AG04449 (cell line): ENCODE measurements at regions of chr14 and their contacts with region 1.

Region 1: DNA sequence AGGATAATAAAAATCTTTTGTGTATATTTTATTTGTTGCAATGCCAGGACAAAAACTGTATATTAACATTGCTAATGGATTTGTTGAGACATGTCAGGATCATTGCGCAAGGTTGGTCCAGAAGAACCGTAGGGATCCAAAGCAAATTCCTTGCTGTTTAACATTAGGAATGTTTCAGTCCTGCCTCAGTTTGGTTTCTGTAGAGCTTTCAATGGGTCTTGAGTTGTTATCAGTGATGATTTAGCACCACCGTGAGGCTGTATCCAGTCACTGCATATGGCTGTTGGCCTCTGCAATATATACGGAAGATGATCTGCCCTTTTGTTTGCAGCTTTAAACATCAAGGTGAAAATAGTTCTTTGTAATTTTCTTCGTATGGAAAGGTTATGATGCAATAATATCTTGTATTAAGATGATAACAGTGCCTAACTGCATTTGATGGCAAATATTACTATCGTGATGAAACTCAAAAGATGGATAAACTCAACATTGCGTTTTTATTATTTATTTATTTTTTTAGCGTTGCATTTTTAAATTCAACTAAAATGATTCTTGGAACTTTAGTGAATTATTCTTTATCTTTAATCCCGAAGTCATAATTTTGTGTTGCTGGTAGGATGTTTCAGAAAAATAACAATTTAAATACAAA is 231.2 kb downstream of the AKAP6 start:
- DNase-seq: peak; percentile 64
- H3K4me3 ChIP-seq: no peak overlapping the region
- CTCF ChIP-seq: peak; percentile 74

Region 2: DNA sequence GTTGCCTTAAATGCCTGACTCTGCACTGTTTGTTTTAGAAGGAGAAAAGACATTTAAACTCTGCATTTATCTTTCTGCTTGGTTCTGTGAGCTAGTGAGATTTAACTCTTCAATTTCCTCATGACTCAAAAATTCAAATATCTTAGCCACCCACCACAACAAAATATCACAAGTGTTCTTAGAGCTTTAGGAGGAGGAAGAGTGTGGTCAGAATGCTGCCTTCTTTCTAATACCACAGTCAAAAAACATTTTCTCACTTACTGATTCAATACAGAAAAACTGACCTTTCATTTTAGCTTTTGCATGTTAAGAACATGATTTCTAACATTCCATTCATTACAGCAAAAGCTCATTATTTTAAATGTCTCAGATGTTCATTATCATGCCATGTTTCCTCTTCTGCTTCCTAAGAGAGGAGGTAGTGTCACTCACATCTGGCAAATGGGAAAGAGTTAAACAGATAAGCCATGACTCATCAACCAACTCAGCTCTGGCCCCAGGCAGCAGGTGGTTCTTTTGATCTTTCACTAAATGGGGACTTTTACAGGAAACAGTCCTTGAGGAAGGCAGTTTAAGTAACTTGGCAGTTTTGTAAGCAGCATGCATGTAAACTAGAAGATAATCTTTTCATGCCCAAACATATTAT is 300.8 kb before region 1 on chr14:
- CTCF ChIA-PET with region 1: interaction called, 42 read pairs
- POLR2A ChIA-PET with region 1: no interaction called
- DNase-seq: no peak
- H3K4me3 ChIP-seq: no peak overlapping the region
- CTCF ChIP-seq: no peak

Region 3: GRCh38 chr14:32469388-32470160 is 90.8 kb before region 1 on chr14:
- CTCF ChIA-PET with region 1: interaction called, 36 read pairs
- POLR2A ChIA-PET with region 1: no interaction called
- DNase-seq: no peak
- H3K4me3 ChIP-seq: no peak overlapping the region
- CTCF ChIP-seq: peak; percentile 26

Region 4: DNA sequence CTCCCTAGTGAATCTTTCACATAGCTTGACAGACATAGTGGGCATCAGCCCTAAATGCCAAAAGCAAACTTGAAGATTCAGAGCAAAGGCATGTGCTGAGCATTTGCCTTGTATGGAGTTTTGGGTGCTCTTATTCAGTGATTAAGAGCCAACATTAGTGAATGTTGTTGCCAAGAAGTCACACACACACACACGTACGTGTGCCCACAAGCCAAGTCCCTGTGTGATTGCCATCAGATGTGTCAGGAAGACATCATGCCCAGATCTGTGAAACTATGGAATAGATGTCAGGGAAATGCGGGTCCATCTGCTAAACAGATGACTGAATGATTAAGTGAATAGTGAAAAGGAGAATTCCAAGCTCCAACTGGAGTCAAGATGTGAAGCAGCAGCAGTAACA is 82.3 kb before region 1 on chr14:
- CTCF ChIA-PET with region 1: interaction called, 36 read pairs
- POLR2A ChIA-PET with region 1: no interaction called
- DNase-seq: no peak
- H3K4me3 ChIP-seq: no peak overlapping the region
- CTCF ChIP-seq: no peak

Region 5: GRCh38 chr14:32509632-32510187 is 50.6 kb before region 1 on chr14:
- CTCF ChIA-PET with region 1: interaction called, 26 read pairs
- POLR2A ChIA-PET with region 1: no interaction called
- DNase-seq: peak; percentile 99
- H3K4me3 ChIP-seq: no peak overlapping the region
- CTCF ChIP-seq: no peak

Region 6: GRCh38 chr14:32545095-32545494 is 15.2 kb before region 1 on chr14:
- CTCF ChIA-PET with region 1: interaction called, 15 read pairs
- POLR2A ChIA-PET with region 1: no interaction called
- DNase-seq: no peak
- H3K4me3 ChIP-seq: no peak overlapping the region
- CTCF ChIP-seq: no peak

Region 7: DNA sequence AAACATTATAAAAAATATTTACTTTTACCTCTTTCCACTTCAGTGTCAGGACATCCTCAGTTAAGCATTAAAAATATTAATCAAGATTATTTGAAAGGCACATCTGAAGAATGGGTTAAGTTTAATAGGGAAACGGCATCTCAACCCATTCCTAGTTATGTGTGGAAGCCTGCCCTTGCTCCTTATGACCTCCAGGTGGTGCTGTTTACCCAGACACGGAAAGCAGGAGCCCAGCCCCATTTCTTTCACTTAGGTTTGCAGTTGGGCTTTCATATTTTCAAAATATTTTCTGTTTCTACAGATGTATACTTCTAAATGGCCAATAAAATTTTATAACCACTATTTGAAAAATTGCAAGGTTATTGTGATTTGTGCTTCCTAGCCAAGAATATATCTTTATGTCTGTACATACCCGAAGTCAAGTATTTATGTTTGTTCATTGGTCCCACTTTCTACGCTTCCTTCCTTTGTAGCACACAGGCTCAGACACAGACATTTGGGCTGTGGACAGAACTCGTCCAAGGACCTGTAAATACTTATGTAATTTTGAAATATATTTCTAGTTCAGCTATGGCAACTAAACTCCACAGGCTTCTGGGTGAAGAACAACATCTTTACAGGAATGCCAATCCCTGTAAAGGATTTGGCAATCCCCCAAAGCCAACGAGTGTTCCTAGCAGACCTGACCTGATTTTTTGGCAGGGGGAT is 15.9 kb after region 1 on chr14:
- CTCF ChIA-PET with region 1: interaction called, 29 read pairs
- POLR2A ChIA-PET with region 1: no interaction called
- DNase-seq: no peak
- H3K4me3 ChIP-seq: no peak overlapping the region
- CTCF ChIP-seq: peak; percentile 88